B cell (primary cell): ENCODE measurements at regions of chr9 and their contacts with region 1.

Region 1: DNA sequence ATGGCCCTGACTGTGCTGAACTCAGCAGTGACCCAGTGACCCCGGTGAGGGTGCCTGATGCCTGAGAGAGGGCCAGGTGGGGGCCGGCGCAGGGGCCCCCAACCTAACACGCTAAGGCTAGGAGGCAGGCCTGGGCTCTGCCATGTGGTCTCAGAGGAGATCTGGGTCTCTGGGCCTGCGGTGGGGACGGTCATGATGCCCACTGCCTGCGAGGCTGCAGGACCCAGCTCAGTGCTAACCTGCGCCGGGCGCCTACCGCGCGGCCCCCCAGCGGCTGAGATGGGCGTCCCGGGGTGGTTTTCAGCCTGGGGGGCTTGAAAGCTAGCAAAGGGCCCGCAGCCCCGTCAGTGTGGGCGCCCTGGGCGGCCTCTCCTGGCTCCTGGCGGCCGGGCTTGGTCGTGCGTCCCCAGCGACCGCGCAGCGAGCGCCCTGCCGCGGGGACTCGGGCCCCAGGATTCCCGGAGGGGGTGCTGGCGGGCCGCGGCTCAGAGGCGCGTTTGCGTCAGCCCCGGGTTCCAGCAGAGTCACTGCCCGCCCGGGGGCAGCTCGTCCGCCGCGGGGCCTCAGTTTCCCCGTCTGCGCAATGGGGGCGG is 2.5 kb downstream of the EGFL7 start:
- DNase-seq: peak; percentile 44
- ATAC-seq: peak; percentile 20
- H3K4me3 ChIP-seq: peak overlapping the region in 3 of 5 experiments; percentile 27 to 41 (median 40)
- H3K4me3 Mint-ChIP-seq: peak overlapping the region; percentile 64
- H3K27ac ChIP-seq: no peak overlapping the region
- H3K27ac Mint-ChIP-seq: no peak overlapping the region
- H3K4me1 ChIP-seq: peaks cover 6 to 17% of the 10 kb centered on the region in 2 donors
- H3K4me1 Mint-ChIP-seq: peaks cover 12% of the 10 kb centered on the region
- H3K27me3 ChIP-seq: peaks cover 0 to 65% (median 32%) of the 10 kb centered on the region in 4 experiments
- H3K27me3 Mint-ChIP-seq: peaks cover 19% of the 10 kb centered on the region
- CTCF ChIP-seq: peak; percentile 20

Region 2: DNA sequence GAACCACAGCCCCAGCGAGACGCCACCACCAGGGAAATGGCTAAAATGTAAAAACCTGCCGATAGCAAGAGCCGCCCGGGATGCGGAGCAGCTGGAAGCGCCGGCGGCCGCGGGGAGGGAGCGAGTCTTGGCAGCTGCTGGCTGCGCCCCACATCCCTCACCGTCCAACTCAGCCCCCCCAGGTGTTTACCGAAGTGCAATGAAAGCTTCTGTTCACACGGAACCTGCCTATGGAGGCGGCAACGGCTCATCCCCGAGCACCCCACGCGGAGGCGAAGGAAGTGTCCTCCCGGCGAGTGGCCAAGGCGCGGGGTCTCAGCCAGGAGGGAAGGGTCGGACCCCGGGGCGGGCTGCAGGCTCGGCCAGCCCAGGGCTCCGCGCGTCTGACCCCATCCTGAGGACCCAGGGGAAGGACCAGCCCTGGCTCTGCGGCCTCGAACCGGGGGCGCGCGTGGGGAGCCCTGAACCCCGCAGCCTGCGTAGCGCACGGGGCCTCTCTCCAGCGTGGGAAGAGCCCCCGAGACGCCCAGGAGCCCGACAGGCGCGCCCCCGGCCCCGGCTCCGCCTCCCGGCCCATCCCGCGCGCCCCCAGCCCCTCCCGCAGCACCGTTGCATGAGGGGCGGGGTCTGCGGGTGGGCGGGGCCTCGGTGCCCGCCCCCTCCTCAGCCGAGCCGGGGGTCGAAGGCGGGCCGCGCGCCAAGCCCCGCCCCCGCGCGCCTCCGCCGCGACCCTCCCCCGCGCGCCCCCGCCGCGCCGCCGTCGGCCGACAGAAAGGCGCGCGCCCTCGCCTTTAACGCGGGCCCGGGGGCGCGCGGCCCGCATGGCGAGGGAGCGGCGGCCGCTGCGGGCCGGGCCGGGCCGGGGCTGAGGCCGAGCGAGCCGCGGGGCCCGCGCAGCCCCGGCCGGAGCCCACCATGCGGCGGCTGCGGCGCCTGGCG is 46.8 kb after region 1 on chr9 and contains the start of gene DIPK1B:
- CTCF ChIA-PET with region 1: interaction called, 4 read pairs
- POLR2A ChIA-PET with region 1: no interaction called
- intact Hi-C with region 1: loop called (anchors 10 kb)
- DNase-seq: peak; percentile 67
- ATAC-seq: peak; percentile 55
- H3K4me3 ChIP-seq: peak within 1 kb of the TSS in 4 of 5 experiments; percentile 33 to 48 (median 42)
- H3K4me3 Mint-ChIP-seq: peak within 1 kb of the TSS; percentile 80
- H3K27ac ChIP-seq: no peak within 1 kb of the TSS
- H3K27ac Mint-ChIP-seq: peak within 1 kb of the TSS; percentile 70
- H3K4me1 ChIP-seq: peaks cover 31 to 33% of the 10 kb centered on the region in 2 donors
- H3K4me1 Mint-ChIP-seq: peaks cover 21% of the 10 kb centered on the region
- H3K27me3 ChIP-seq: peaks cover 0 to 39% (median 6%) of the 10 kb centered on the region in 4 experiments
- H3K27me3 Mint-ChIP-seq: peaks cover 23% of the 10 kb centered on the region
- CTCF ChIP-seq: no peak
- total RNA-seq, gene DIPK1B: 9.2 and 9.6 TPM in 2 replicates

Region 3: GRCh38 chr9:137301081-137301947 is 636.1 kb after region 1 on chr9:
- CTCF ChIA-PET with region 1: no interaction called
- POLR2A ChIA-PET with region 1: no interaction called
- intact Hi-C with region 1: no loop called
- DNase-seq: peak; percentile 67
- ATAC-seq: no peak
- H3K4me3 ChIP-seq: peak overlapping the region; percentile 35 to 58 (median 46)
- H3K4me3 Mint-ChIP-seq: peak overlapping the region; percentile 83
- H3K27ac ChIP-seq: no peak overlapping the region
- H3K27ac Mint-ChIP-seq: peak overlapping the region; percentile 20
- H3K4me1 ChIP-seq: peaks cover 46 to 48% of the 10 kb centered on the region in 2 donors
- H3K4me1 Mint-ChIP-seq: peaks cover 24% of the 10 kb centered on the region
- H3K27me3 ChIP-seq: peaks cover 0 to 70% (median 41%) of the 10 kb centered on the region in 4 experiments
- H3K27me3 Mint-ChIP-seq: peaks cover 18% of the 10 kb centered on the region
- CTCF ChIP-seq: no peak